ENCODE measurements at regions of chr1 and their contacts with region 1.

Region 1: DNA sequence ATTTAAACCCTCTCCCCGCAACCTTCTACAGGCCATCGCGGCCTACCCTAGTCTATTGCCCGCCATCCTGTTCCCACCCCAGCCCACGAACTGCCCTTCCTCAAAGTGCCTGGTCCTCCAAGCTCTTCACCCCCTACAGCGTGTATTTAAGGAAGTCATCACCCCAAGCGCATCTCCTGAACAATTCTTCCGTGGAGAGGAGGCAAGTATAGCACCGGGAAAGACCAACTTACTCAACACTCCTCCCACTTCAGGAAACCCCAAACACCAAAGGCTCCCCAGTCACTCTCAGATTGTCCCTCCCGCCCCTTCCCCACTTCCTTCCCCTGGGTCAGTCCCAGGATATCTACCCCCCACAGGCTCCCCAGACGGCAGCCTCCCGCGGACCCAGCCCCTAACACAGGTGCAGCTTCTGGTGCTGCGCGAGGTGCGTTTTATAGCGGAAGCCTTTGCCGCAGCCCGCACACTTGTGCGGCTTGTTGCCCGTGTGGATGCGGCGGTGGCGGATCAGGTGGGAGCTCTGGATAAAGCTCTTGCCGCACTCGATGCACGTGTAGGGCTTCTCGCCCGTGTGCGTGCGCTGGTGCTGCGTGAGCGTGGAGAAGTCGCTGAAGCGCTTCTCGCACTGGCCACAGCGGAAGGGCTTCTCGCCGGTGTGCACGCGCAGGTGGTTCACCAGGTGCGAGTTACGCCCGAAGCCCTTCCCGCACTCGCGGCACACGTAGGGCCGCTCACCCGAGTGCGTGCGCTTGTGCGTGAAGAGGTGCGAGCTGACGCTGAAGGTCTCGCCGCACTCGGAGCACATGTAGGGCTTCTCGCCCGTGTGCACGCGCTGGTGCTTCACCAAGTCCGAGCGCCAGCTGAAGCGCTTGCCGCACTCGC is 25.5 kb downstream of the ZNF697 start:
- DNase-seq: no peak
- H3K4me3 ChIP-seq: no peak overlapping the region
- H3K27ac ChIP-seq: no peak overlapping the region
- H3K4me1 ChIP-seq: peaks cover 0 to 7% (median 0%) of the 10 kb centered on the region in 4 experiments
- H3K27me3 ChIP-seq: no peaks in the 10 kb centered on the region

Region 2: DNA sequence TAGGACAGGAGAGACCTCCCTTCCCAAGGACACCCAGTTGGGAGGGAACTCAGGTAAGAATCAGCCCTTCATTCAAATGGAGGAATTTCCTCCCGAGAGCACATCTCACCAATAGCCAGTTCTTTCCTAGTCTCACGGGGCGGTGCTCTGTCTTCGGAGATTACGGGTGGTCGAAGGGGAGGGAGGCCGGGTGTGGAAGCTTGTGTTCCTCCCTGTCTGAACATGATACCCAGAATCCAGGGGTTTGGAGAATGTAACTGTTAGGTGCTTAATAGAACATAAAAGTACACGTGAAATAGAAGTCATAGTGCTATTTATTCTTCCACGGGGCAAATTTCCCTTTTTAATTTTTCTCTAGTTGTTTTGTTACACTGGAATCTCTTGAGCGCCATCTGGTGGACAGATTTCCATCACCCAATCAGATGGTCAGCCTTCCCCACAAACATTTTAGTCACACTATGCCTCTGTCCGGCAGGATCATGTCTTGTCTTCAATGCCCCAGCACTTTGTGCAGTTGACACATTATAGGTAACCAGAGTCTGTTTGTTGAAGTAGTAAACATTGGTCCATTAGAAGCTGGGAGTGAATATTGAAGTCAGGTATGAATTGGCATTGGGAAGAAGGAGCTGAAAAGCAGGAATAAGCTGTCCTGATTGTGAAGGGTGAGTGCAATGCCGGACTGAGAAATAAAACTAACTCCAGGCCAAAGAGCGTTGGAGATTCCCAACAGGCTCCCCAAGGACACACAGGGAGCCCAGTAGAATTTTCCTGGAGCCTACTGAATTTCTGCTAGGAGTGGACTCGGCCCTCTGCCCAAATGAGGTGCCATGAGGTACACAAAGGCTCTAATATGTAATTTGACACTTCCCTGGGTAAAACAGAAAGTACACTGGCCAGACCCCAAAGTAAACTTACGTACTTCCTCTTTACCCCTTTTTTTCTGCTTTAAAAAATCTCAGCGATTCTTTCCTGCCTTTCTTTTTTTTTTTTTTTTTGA is 53.1 kb after region 1 on chr1:
- CTCF ChIA-PET with region 1: interaction called, 19 read pairs
- POLR2A ChIA-PET with region 1: no interaction called
- DNase-seq: peak; percentile 81 to 91 (median 86)
- H3K4me3 ChIP-seq: peak overlapping the region; percentile 8 to 86 (median 65)
- H3K27ac ChIP-seq: peak overlapping the region in 1 of 2 experiments; percentile 7
- H3K4me1 ChIP-seq: peaks cover 0 to 15% (median 4%) of the 10 kb centered on the region in 4 experiments
- H3K27me3 ChIP-seq: no peaks in the 10 kb centered on the region